ENCODE measurements at regions of chr18 and their contacts with region 1.

Region 1: GRCh38 chr18:25561918-25562317 is 210.0 kb upstream of the ZNF521 start:
- DNase-seq: peak; percentile 12
- H3K4me3 Mint-ChIP-seq: no peak overlapping the region
- H3K27ac Mint-ChIP-seq: no peak overlapping the region
- H3K4me1 Mint-ChIP-seq: no peaks in the 10 kb centered on the region
- H3K27me3 Mint-ChIP-seq: no peaks in the 10 kb centered on the region

Region 2: DNA sequence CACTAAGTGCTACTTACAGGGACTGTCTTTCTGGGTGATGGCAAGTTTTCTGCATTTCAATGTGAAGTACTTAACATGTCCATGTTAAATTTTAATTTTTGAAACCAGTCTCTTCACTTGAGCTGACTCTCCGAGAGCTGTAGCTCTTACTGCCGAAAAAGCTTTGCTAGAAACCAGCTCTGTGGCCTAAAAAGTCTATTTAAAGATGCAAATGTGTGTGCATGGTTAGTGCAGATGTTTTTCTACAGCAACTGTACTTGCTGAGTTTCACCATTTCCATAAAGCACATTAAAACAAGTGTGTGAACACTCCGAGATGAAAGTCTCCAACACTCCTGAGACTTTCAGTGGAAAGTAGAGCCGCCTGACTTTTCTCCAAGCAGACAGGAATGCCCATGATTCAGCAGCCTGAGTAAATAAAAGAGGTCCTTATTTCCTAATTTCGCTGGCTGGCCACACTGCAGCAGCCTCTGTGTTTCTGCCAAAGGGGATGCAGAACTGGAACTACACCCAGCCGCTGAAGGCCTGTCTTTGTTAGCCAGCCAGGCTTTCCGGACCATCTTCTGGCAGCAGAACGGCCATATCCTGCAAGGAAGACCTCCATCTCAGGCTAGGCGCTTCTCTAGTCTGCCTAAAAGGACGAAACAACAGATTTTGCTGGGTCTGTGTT is 331.1 kb before region 1 on chr18:
- CTCF ChIA-PET with region 1: no interaction called
- intact Hi-C with region 1: no loop called
- DNase-seq: no peak
- H3K4me3 Mint-ChIP-seq: no peak overlapping the region
- H3K27ac Mint-ChIP-seq: no peak overlapping the region
- H3K4me1 Mint-ChIP-seq: no peaks in the 10 kb centered on the region
- H3K27me3 Mint-ChIP-seq: peaks cover 2% of the 10 kb centered on the region

Region 3: GRCh38 chr18:25896178-25896780 is 334.4 kb after region 1 on chr18:
- CTCF ChIA-PET with region 1: no interaction called
- intact Hi-C with region 1: loop called (anchors 10 kb)
- DNase-seq: peak; percentile 49
- H3K4me3 Mint-ChIP-seq: no peak overlapping the region
- H3K27ac Mint-ChIP-seq: no peak overlapping the region
- H3K4me1 Mint-ChIP-seq: no peaks in the 10 kb centered on the region
- H3K27me3 Mint-ChIP-seq: no peaks in the 10 kb centered on the region

Measured in activated naive CD4-positive, alpha-beta T cell treated with anti-CD3 and anti-CD28 coated beads for 36 hours (primary cell).